Common myeloid progenitor, CD34-positive (primary cell): ENCODE measurements at regions of chr1 and their contacts with region 1.

Region 1: DNA sequence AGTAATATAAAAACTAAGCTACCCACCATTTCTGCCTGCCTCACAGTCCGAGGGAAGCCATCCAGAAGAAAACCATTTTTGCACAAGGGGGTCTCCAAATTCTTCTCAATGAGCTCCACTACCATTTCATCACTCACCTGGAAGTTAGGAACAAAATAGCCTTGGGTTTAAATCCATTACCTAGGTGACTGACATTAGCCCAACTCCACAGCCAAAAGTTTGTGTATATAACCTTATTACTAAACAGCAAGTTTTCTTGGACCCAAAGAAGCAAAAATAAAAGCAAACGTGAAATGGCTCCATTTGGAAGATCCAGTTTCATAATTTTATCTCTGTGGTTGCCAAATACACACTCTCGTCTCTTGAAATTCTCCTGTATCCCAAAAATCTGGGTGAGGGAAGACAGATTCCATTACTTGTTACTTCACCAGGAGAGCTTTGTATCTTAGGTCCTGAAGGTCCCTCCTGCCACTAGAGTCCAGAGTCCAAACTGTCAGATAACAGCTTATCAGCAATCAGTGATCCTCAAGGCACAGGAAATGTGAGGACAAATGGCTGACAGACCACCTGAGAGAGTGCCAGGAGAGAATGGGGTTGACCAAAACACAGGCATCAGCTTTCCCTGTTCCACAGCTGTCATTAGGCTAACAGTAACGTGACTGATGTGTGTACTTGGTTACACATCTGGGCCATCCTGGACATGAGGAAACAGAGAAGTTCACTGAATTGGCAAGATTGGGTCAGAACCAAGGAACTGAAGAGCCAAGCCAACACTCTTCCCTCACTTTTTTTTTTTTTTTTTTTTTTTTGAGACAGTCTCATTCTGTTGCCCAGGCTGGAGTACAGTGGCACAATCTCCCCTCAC is 14.9 kb downstream of the AK2 start:
- DNase-seq: no peak
- H3K4me3 ChIP-seq: no peak overlapping the region
- H3K27ac ChIP-seq: no peak overlapping the region
- H3K4me1 ChIP-seq: no peaks in the 10 kb centered on the region
- H3K27me3 ChIP-seq: no peaks in the 10 kb centered on the region

Region 2: DNA sequence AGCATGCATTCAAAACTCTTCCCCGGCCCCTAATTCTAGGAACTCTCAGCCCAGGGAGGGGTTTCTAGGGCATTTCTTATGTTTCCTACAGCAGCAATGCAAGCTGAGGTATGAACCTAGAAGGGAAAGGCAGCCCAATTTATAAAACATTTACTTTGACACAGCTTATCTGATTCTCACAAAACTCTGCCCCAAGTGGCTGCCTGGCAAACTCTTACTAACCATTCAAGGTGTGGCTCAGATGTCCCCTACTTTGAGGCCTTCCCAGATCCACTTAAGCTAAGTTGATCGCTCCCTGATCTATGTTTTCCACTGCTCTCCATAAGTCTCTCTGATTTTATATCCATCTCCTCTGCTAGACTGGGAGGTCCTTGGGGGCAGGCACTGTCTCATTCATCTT is 20.5 kb before region 1 on chr1:
- CTCF ChIA-PET with region 1: interaction called, 10 read pairs
- POLR2A ChIA-PET with region 1: no interaction called
- DNase-seq: peak in 1 of 3 donors; percentile 29
- H3K4me3 ChIP-seq: no peak overlapping the region
- H3K27ac ChIP-seq: no peak overlapping the region
- H3K4me1 ChIP-seq: peaks cover 11 to 22% (median 18%) of the 10 kb centered on the region in 4 experiments
- H3K27me3 ChIP-seq: no peaks in the 10 kb centered on the region